Left ventricle myocardium inferior (tissue), 1 donor: ENCODE measurements at regions of chr14 and their contacts with region 1.

Region 1: GRCh38 chr14:51780006-51780692 is 80.3 kb upstream of the GNG2 start:
- DNase-seq: peak; percentile 67
- H3K4me3 ChIP-seq: no peak overlapping the region
- H3K27ac ChIP-seq: no peak overlapping the region
- H3K4me1 ChIP-seq: peaks cover 8% of the 10 kb centered on the region
- H3K27me3 ChIP-seq: peaks cover 28% of the 10 kb centered on the region
- CTCF ChIP-seq: peak; percentile 88

Region 2: GRCh38 chr14:51726166-51726899 is 53.8 kb before region 1 on chr14:
- intact Hi-C with region 1: no loop called
- DNase-seq: no peak
- H3K4me3 ChIP-seq: no peak overlapping the region
- H3K27ac ChIP-seq: no peak overlapping the region
- H3K4me1 ChIP-seq: no peaks in the 10 kb centered on the region
- H3K27me3 ChIP-seq: no peaks in the 10 kb centered on the region
- CTCF ChIP-seq: no peak

Region 3: GRCh38 chr14:51821822-51822221 is 41.7 kb after region 1 on chr14:
- intact Hi-C with region 1: loop called (anchors 2 kb)
- DNase-seq: no peak
- H3K4me3 ChIP-seq: no peak overlapping the region
- H3K27ac ChIP-seq: no peak overlapping the region
- H3K4me1 ChIP-seq: no peaks in the 10 kb centered on the region
- H3K27me3 ChIP-seq: peaks cover 3% of the 10 kb centered on the region
- CTCF ChIP-seq: no peak

Region 4: GRCh38 chr14:51979088-51979709 is 199.1 kb after region 1 on chr14:
- intact Hi-C with region 1: loop called (anchors 10 kb)
- DNase-seq: peak; percentile 81
- H3K4me3 ChIP-seq: no peak overlapping the region
- H3K27ac ChIP-seq: peak overlapping the region; percentile 66
- H3K4me1 ChIP-seq: peaks cover 7% of the 10 kb centered on the region
- H3K27me3 ChIP-seq: no peaks in the 10 kb centered on the region
- CTCF ChIP-seq: peak; percentile 93